ENCODE measurements at regions of chr6 and their contacts with region 1.

Region 1: GRCh38 chr6:164106345-164106769 is 691.8 kb downstream of the QKI start:
- DNase-seq: peak in 2 of 7 donors; percentile 16 to 41
- H3K4me3 ChIP-seq: no peak overlapping the region
- H3K27ac ChIP-seq: no peak overlapping the region
- H3K4me1 ChIP-seq: peaks cover 0 to 5% of the 10 kb centered on the region in 2 donors
- H3K27me3 ChIP-seq: no peaks in the 10 kb centered on the region
- CTCF ChIP-seq: peak in 3 of 6 experiments; percentile 11 to 26 (median 24)
- POLR2A ChIP-seq: no peak

Region 2: GRCh38 chr6:163984124-163984936 is 122.0 kb before region 1 on chr6:
- intact Hi-C with region 1: loop called in 1 of 2 experiments (anchors 10 kb)
- DNase-seq: no peak
- H3K4me3 ChIP-seq: no peak overlapping the region
- H3K27ac ChIP-seq: no peak overlapping the region
- H3K4me1 ChIP-seq: peaks cover 4 to 5% of the 10 kb centered on the region in 2 donors
- H3K27me3 ChIP-seq: no peaks in the 10 kb centered on the region
- CTCF ChIP-seq: no peak
- POLR2A ChIP-seq: no peak

Measured in adrenal gland (tissue), 19 donors.